MCF 10A (cell line): ENCODE measurements at regions of chr10 and their contacts with region 1.

Region 1: GRCh38 chr10:50396491-50397311 is 145.4 kb upstream of the ASAH2 start:
- DNase-seq: no peak
- H3K4me3 Mint-ChIP-seq: peak overlapping the region; percentile 8
- H3K27ac Mint-ChIP-seq: peak overlapping the region; percentile 37
- H3K4me1 Mint-ChIP-seq: peaks cover 58% of the 10 kb centered on the region
- H3K27me3 Mint-ChIP-seq: no peaks in the 10 kb centered on the region
- CTCF ChIP-seq: no peak

Region 2: DNA sequence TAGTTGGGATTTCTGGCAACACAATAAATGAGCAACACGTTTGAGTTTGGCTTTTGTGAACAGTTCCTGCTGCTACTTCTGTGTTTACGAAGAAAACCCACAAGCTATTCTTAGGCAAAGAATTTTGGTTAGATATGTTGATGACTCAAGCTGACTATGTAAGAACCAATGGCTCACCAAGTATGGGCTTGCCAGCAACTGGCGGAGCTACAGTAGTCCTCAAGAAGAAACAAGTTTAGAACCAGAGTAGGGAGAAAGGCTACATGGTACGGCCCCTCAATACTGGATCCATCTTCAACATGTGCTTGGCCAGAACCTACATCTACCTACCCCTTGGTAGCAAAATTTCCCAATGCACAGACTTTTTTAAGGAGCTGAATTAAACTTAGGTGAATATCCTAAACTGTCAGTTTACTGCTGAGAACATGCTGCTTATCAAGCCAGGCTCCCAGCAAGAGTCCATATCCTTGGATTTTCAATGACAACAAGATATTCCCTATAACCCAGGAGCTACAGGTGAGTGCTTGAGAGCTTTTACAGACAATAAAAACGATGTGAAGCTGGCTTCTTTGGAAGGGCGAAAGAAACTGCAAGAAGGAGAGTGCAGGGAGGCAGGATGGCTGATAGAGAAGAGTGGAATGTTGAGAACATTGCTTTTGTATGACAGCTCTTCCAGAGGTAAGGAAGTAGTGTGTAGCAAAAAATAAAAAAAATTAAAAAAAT is 71.1 kb before region 1 on chr10:
- CTCF ChIA-PET with region 1: no interaction called
- POLR2A ChIA-PET with region 1: interaction called, 50 read pairs
- intact Hi-C with region 1: loop called (anchors 5 kb)
- DNase-seq: peak; percentile 93
- H3K4me3 Mint-ChIP-seq: peak overlapping the region; percentile 50
- H3K27ac Mint-ChIP-seq: peak overlapping the region; percentile 10
- H3K4me1 Mint-ChIP-seq: peaks cover 44% of the 10 kb centered on the region
- H3K27me3 Mint-ChIP-seq: no peaks in the 10 kb centered on the region
- CTCF ChIP-seq: no peak

Region 3: GRCh38 chr10:50385624-50386023 is 11.1 kb before region 1 on chr10:
- CTCF ChIA-PET with region 1: interaction called, 3 read pairs
- POLR2A ChIA-PET with region 1: interaction called, 13 read pairs
- intact Hi-C with region 1: no loop called
- DNase-seq: peak; percentile 74
- H3K4me3 Mint-ChIP-seq: no peak overlapping the region
- H3K27ac Mint-ChIP-seq: peak overlapping the region; percentile 84
- H3K4me1 Mint-ChIP-seq: peaks cover 19% of the 10 kb centered on the region
- H3K27me3 Mint-ChIP-seq: no peaks in the 10 kb centered on the region
- CTCF ChIP-seq: no peak